Right ventricle myocardium inferior (tissue), 1 donor: ENCODE measurements at regions of chr11 and their contacts with region 1.

Region 1: GRCh38 chr11:73404048-73404447 is 27.8 kb downstream of the RELT start:
- DNase-seq: peak; percentile 84
- ATAC-seq: peak; percentile 94

Region 2: GRCh38 chr11:73140213-73141030 is 263.6 kb before region 1 on chr11:
- intact Hi-C with region 1: no loop called
- DNase-seq: no peak
- ATAC-seq: no peak

Region 3: GRCh38 chr11:73469401-73469800 is 65.4 kb after region 1 on chr11:
- intact Hi-C with region 1: no loop called
- DNase-seq: no peak
- ATAC-seq: no peak

Region 4: GRCh38 chr11:73528483-73529203 is 124.6 kb after region 1 on chr11:
- intact Hi-C with region 1: loop called (anchors 5 kb)
- DNase-seq: no peak
- ATAC-seq: peak; percentile 42

Region 5: GRCh38 chr11:73597956-73598718 is 194.1 kb after region 1 on chr11 and contains the start of gene FAM168A:
- intact Hi-C with region 1: loop called (anchors 5 kb)
- DNase-seq: peak; percentile 99
- ATAC-seq: peak; percentile 99
- total RNA-seq, gene FAM168A: 26.2 TPM

Region 6: GRCh38 chr11:73625696-73626318 is 221.8 kb after region 1 on chr11:
- intact Hi-C with region 1: loop called (anchors 10 kb)
- DNase-seq: peak; percentile 76
- ATAC-seq: peak; percentile 80

Region 7: DNA sequence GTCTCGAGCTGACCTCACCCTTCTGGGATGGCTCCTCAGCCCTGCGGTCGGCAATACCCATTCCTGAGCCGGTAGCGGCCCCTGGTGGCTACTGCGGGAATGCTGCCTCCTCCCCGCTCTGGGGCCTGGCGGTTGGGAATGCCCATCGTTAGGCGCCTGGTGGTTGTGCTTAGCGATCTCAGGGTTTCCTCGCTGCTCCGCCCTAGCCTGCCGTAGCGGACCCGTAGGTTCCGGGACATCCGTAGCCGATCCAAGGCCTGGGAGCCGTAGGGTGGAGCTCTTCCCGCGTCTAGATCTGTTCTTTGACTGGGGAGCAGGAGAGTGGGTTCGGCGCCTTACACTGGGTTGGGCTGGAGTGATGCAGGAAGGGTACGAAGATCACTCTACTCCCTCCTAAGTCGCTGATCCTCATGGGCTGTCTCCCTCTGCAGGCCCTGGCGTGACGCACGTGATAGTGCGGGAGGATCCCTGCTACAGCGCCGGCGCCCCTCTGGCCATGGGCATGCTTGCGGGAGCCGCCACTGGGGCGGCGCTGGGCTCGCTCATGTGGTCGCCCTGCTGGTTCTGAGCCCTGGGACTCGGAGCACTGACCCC is 257.1 kb after region 1 on chr11:
- intact Hi-C with region 1: loop called (anchors 1 kb)
- DNase-seq: peak; percentile 94
- ATAC-seq: peak; percentile 96